ENCODE measurements at regions of chr1 and their contacts with region 1.

Region 1: DNA sequence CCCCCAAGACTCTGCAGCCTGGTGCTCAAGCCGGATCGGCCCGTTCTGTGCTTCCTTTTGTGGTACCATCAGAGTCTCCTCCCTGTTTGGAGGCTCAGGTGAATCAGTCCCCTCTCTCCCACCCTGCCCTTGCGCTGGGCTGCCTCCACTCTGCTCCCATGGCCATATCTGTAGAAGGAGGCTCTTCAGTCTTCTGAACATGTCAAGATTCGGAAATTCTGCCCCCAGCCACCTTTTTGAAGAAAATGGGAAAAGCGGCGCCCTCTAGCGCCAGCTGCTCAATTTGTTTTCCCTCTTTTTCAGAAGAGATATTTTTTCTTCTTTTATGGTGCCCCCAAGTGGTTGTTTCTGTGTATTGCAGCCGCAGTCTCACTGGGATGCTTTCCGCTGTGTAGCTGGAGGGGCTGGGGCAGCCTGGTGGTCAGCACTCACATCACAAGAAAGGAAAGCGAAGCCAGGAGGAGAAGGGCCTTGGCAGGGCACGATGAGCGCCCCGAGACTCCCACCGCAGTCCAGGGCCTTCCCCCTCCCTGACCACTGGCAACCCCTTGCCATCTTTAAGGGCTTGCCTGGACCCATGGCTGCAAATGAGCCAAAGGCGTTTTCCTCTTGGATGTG is 58.4 kb upstream of the CACNA1E start:
- DNase-seq: no peak
- H3K4me3 ChIP-seq: no peak overlapping the region
- H3K27ac ChIP-seq: no peak overlapping the region
- H3K4me1 ChIP-seq: no peaks in the 10 kb centered on the region
- H3K27me3 ChIP-seq: no peaks in the 10 kb centered on the region
- CTCF ChIP-seq: peak; percentile 81 to 84 (median 82)
- POLR2A ChIP-seq: no peak

Region 2: GRCh38 chr1:181189691-181190363 is 235.1 kb before region 1 on chr1:
- intact Hi-C with region 1: loop called (anchors 5 kb)
- DNase-seq: no peak
- H3K4me3 ChIP-seq: peak overlapping the region in 1 of 2 donors; percentile 34
- H3K27ac ChIP-seq: no peak overlapping the region
- H3K4me1 ChIP-seq: peaks cover 9% of the 10 kb centered on the region
- H3K27me3 ChIP-seq: no peaks in the 10 kb centered on the region
- CTCF ChIP-seq: peak; percentile 52 to 88 (median 66)
- POLR2A ChIP-seq: no peak

Region 3: DNA sequence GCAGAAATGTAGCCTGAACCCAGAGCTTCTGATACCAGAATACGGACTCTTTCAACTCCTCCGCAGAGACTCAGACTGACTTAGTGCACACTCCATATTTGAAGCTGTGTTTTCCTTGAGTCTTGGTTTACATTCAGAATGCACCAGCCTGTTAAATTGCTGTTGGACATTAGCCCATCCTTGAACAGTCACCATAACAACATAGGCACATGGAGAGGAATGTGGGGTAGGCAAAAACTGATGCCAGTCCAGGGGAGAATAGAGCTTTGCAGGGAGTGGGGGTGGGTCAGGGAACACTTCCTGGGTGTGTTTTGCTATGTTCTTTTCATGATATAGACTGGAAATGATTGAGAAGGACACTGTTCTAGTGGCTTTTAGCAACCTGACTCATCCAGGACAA is 17.9 kb before region 1 on chr1:
- intact Hi-C with region 1: no loop called
- DNase-seq: no peak
- H3K4me3 ChIP-seq: no peak overlapping the region
- H3K27ac ChIP-seq: no peak overlapping the region
- H3K4me1 ChIP-seq: no peaks in the 10 kb centered on the region
- H3K27me3 ChIP-seq: no peaks in the 10 kb centered on the region
- CTCF ChIP-seq: no peak
- POLR2A ChIP-seq: no peak

Region 4: GRCh38 chr1:181452754-181453153 is 27.9 kb after region 1 on chr1:
- intact Hi-C with region 1: no loop called
- DNase-seq: no peak
- H3K4me3 ChIP-seq: no peak overlapping the region
- H3K27ac ChIP-seq: no peak overlapping the region
- H3K4me1 ChIP-seq: no peaks in the 10 kb centered on the region
- H3K27me3 ChIP-seq: no peaks in the 10 kb centered on the region
- CTCF ChIP-seq: no peak
- POLR2A ChIP-seq: no peak

Measured in vagina (tissue), 2 donors.